Heart left ventricle (tissue), 16 donors: ENCODE measurements at regions of chrX and their contacts with region 1.

Region 1: GRCh38 chrX:152821145-152821765 is 9.3 kb downstream of the CETN2 start:
- DNase-seq: no peak
- ATAC-seq: no peak
- H3K4me3 ChIP-seq: no peak overlapping the region
- H3K27ac ChIP-seq: no peak overlapping the region
- H3K4me1 ChIP-seq: no peaks in the 10 kb centered on the region
- H3K27me3 ChIP-seq: peaks cover 0 to 26% (median 0%) of the 10 kb centered on the region in 9 donors
- CTCF ChIP-seq: peak in 11 of 12 donors; percentile 14 to 56 (median 36)
- POLR2A ChIP-seq: no peak

Region 2: DNA sequence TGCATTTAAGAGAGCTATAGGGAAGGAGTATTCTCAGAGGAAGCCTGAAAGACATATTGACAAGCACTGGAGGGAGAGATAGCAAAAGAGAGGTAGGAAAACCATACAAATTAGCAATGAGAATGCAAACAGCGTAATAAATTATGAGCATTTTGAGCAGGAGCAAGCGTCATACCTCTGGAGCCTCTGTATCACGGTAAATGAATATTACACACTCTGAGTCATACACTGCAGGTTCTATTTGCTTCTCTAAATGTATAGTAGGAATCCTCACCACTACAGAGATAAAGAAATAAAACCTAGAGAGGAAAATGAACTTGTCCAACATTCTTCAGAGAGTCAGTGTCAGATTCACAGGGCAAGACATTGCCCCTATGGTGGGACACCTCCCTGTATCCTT is 800.4 kb before region 1 on chrX:
- intact Hi-C with region 1: no loop called
- DNase-seq: no peak
- ATAC-seq: no peak
- H3K4me3 ChIP-seq: no peak overlapping the region
- H3K27ac ChIP-seq: no peak overlapping the region
- H3K4me1 ChIP-seq: no peaks in the 10 kb centered on the region
- H3K27me3 ChIP-seq: peaks cover 0 to 5% (median 0%) of the 10 kb centered on the region in 9 donors
- CTCF ChIP-seq: no peak
- POLR2A ChIP-seq: no peak

Region 3: DNA sequence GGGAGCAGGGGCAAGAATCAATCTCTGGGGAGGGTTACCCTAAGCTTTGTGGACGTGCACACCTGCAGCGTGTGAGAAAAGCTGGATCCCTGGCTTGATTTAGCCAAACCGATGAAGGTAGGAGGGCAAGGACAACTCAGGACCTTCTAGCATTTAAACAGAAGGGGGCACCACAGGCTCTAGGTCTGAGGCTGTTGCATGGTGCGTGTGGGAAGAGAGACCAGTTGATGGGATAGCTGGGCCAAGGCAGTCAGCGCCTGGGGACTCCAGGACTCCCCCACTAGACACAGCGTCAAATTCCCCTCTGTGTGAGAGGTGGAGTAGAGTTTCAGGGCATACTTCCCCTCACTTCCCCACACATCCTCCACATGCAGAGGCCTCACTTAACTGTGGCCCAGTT is 179.3 kb before region 1 on chrX:
- intact Hi-C with region 1: loop called in 7 of 10 experiments (anchors 2 to 10 kb)
- DNase-seq: no peak
- ATAC-seq: peak in 3 of 4 donors; percentile 34 to 63 (median 41)
- H3K4me3 ChIP-seq: no peak overlapping the region
- H3K27ac ChIP-seq: no peak overlapping the region
- H3K4me1 ChIP-seq: peaks cover 0 to 10% (median 0%) of the 10 kb centered on the region in 12 donors
- H3K27me3 ChIP-seq: peaks cover 2 to 25% (median 18%) of the 10 kb centered on the region in 9 donors
- CTCF ChIP-seq: peak in 6 of 12 donors; percentile 11 to 29 (median 21)
- POLR2A ChIP-seq: no peak

Region 4: DNA sequence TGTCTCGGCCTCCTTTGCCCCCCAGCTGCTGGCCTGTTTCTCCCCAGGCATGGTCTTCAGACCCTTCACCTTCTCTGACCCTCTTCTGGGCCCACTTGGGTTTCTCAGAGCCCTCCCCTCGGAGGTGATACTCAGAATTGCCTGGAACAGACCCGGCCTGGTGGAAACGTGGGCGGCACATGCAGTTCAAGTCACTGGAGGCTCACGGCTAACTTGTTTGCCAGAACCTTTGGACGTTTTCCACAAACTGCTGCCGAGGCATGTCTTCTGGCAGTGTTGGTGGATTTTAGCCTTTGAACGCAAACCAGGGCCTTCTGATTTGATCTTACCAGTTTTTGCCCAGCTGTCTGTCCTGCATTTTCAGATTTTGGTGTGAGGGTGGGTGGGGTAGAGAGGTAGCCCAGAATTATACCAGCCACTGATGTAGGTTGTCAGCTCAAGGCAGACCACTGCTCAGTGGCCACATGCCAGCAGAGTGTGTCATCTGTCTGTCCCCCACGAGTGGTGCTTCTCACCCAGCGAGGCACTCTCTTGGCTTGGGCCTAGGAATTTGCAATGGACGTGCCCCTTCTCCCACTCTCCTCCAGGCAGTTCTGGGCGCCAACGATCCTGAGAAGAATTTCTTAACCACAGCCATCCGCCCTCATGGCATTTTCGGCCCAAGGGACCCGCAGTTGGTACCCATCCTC is 44.1 kb after region 1 on chrX:
- intact Hi-C with region 1: no loop called
- DNase-seq: no peak
- ATAC-seq: peak in 1 of 4 donors; percentile 18
- H3K4me3 ChIP-seq: no peak overlapping the region
- H3K27ac ChIP-seq: no peak overlapping the region
- H3K4me1 ChIP-seq: no peaks in the 10 kb centered on the region
- H3K27me3 ChIP-seq: no peaks in the 10 kb centered on the region
- CTCF ChIP-seq: no peak
- POLR2A ChIP-seq: no peak

Region 5: DNA sequence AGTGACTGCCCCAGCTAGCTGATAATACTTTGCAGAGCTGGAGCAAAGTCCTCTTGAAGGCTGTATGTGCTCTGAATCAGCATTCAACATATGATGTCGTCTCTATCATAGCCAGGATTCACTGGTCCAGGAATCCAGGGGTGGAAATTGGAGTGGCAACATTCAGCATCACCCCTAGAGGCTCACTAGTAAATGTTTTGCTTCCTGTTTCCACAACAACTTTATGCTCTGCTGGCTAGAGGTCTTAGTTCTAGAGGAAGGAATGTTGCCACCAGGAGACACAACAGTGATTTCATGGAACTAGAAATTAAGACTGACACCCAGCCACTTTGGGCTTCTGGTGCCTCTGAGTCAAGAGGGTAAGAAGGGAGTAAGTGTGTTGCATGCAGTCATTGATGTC is 369.1 kb after region 1 on chrX:
- intact Hi-C with region 1: no loop called
- DNase-seq: no peak
- ATAC-seq: no peak
- H3K4me3 ChIP-seq: no peak overlapping the region
- H3K27ac ChIP-seq: no peak overlapping the region
- H3K4me1 ChIP-seq: no peaks in the 10 kb centered on the region
- H3K27me3 ChIP-seq: peaks cover 0 to 19% (median 0%) of the 10 kb centered on the region in 9 donors
- CTCF ChIP-seq: no peak
- POLR2A ChIP-seq: no peak

Region 6: GRCh38 chrX:153381684-153382532 is 560.7 kb after region 1 on chrX:
- intact Hi-C with region 1: no loop called
- DNase-seq: no peak
- ATAC-seq: peak in 3 of 4 donors; percentile 30 to 37 (median 33)
- H3K4me3 ChIP-seq: no peak overlapping the region
- H3K27ac ChIP-seq: no peak overlapping the region
- H3K4me1 ChIP-seq: peaks cover 0 to 7% (median 0%) of the 10 kb centered on the region in 12 donors
- H3K27me3 ChIP-seq: peaks cover 0 to 3% (median 0%) of the 10 kb centered on the region in 9 donors
- CTCF ChIP-seq: no peak
- POLR2A ChIP-seq: no peak